HCT116 (cell line): ENCODE measurements at regions of chr2 and their contacts with region 1.

Region 1: GRCh38 chr2:211085056-211085680 is 528.8 kb downstream of the CPS1 start:
- DNase-seq: peak; percentile 44
- ATAC-seq: peak; percentile 78
- H3K4me3 ChIP-seq: no peak overlapping the region
- H3K27ac ChIP-seq: no peak overlapping the region
- H3K4me1 ChIP-seq: no peaks in the 10 kb centered on the region
- H3K27me3 ChIP-seq: no peaks in the 10 kb centered on the region
- CTCF ChIP-seq: peak; percentile 45 to 77 (median 55); a peak in 5 of 6 replicates
- POLR2A ChIP-seq: no peak
- RAD21 ChIP-seq: peak; percentile 60

Region 2: DNA sequence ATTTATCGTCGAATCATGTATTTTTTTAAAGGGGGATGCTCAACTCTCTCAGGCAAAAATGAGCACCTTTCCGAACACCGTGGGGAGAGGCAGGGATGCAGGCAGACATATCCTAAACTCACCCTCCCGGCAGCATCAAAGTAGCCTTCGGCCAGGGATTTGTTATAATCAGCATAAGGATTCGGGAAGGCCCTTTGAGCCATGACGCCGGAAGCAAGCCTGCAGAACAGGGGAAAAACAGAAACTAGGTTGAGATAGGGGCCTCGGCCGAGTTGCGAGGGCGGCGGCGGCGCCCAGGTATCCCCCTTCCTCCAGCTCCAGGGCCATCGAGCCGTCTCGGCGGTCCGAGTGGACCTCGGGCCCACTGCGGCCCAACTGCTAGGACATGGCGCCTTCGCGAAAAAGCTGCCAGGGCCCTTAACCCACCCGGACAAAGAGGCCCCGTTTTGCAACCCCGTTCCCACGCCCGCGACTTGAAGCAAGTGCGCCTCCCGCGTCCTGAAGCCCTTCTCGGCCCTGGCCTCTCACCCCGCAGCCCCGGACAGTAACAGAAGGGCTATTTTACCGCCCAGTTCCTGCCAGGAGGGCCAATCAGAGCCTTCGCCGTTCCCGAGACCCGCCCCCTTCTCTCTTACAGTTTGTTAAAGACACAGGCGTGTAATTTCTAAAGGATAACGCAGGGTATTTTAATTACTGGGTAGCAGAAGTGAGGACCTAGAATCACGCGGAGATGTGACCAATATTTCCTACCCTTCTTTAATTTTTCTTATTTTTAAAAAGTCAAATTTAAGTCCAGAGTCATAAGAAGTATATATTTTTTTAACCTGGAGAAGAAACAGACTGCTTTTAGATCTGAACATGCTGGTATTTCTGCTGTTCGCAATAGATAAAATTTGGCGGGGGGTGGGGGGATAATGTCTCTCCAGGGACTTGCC is 608.7 kb before region 1 on chr2 and contains the start of gene LANCL1:
- CTCF ChIA-PET with region 1: no interaction called
- POLR2A ChIA-PET with region 1: no interaction called
- RAD21 ChIA-PET with region 1: no interaction called
- intact Hi-C with region 1: no loop called
- DNase-seq: peak; percentile 80
- ATAC-seq: peak; percentile 98
- H3K4me3 ChIP-seq: peak within 1 kb of the TSS; percentile 85
- H3K27ac ChIP-seq: peak within 1 kb of the TSS; percentile 37
- H3K4me1 ChIP-seq: peaks cover 5 to 22% of the 10 kb centered on the region in 2 experiments; a peak in 3 of 4 replicates
- H3K27me3 ChIP-seq: no peaks in the 10 kb centered on the region
- CTCF ChIP-seq: no peak
- POLR2A ChIP-seq: peak; percentile 85
- RAD21 ChIP-seq: no peak
- total RNA-seq, gene LANCL1: 61.5 TPM

Region 3: DNA sequence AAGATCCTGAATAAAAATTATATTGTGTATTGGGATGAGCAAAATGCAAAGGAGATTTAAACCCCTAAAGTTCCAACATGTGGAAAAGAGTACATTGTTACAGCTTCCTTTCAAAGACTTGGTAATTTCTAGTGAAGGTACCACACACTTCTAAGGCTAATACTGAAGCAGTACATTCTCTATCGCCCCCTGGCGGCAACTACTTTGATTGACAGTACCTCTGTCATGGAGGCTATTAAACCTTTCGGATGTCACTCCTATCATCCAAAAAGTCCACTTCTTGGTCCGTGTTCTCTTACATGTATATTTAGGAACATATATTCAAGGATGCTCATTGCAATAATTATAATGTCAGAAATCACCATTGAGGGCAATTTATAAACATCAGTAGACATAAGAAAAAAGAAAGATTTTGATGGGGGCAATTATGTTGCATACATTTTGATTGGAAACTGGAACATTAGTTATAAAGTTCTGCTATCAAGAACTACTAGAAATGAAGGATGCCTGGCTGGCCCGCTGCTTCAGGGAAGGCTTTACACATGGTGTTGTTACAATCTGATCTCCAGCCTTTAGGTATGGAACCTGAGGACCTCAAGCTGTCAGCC is 72.8 kb after region 1 on chr2:
- CTCF ChIA-PET with region 1: interaction called, 11 read pairs
- POLR2A ChIA-PET with region 1: no interaction called
- RAD21 ChIA-PET with region 1: interaction called in 1 of 2 experiments, 3 read pairs
- intact Hi-C with region 1: loop called (anchors 1 kb)
- DNase-seq: peak; percentile 57
- ATAC-seq: peak; percentile 94
- H3K4me3 ChIP-seq: no peak overlapping the region
- H3K27ac ChIP-seq: no peak overlapping the region
- H3K4me1 ChIP-seq: no peaks in the 10 kb centered on the region
- H3K27me3 ChIP-seq: no peaks in the 10 kb centered on the region
- CTCF ChIP-seq: peak; percentile 66 to 85 (median 80)
- POLR2A ChIP-seq: no peak
- RAD21 ChIP-seq: peak; percentile 61

Region 4: DNA sequence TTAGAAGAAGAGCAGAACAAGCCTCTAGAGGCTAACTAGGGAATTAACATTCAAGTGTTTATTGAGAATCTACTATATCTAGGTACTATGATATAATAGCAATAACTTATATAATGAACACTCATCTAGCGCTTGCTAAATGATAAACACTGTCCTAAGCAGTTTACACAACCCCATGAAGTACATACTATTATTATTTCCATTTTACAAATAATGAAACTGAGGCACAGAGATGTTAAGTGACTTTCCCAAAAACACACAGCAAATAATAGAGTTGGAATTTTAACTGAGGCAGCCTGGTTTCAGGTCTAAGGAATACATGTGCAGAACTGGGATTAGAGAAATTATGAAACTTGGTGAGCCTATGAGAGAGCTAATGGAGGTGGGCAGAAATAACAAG is 364.7 kb after region 1 on chr2:
- CTCF ChIA-PET with region 1: no interaction called
- POLR2A ChIA-PET with region 1: no interaction called
- RAD21 ChIA-PET with region 1: no interaction called
- intact Hi-C with region 1: no loop called
- DNase-seq: no peak
- ATAC-seq: no peak
- H3K4me3 ChIP-seq: no peak overlapping the region
- H3K27ac ChIP-seq: no peak overlapping the region
- H3K4me1 ChIP-seq: no peaks in the 10 kb centered on the region
- H3K27me3 ChIP-seq: no peaks in the 10 kb centered on the region
- CTCF ChIP-seq: peak in 1 of 3 experiments; percentile 35; a peak in 2 of 6 replicates
- POLR2A ChIP-seq: no peak
- RAD21 ChIP-seq: no peak